GM13976 (cell line): ENCODE measurements at regions of chr16 and their contacts with region 1.

Region 1: DNA sequence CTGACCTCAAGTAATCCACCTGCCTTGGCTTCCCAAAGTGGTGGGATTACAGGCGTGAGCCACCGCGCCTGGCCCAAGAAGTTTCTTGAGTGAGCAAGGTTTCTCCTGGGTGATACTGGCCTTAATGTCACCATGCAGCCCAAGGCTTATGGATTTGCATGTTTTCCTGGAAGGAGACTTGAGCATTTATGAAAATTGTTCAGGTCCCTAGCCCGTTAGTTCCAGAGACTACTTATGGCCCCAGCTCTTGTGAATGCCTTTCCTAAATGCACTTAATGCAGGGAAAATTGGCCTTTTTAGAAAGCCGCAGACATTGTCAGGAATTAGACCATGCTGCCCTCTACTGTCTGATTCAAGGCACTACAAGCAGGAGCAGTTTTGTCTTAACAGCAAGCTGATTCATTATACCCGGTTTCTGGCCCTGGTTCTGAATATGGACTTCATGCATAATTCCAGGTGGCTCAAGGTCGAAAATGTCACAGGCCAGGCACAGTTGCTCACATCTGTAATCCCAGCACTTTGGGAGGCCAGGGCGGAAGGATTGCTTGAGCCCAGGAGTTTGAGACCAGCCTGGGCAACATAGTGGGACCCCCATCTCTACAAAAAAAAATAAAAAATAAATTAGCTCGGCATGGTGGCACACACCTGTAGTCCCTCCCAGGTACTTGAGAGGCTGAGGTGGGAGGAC is 91.3 kb downstream of the SNX29 start:
- DNase-seq: peak; percentile 81
- CTCF ChIP-seq: peak; percentile 84

Region 2: DNA sequence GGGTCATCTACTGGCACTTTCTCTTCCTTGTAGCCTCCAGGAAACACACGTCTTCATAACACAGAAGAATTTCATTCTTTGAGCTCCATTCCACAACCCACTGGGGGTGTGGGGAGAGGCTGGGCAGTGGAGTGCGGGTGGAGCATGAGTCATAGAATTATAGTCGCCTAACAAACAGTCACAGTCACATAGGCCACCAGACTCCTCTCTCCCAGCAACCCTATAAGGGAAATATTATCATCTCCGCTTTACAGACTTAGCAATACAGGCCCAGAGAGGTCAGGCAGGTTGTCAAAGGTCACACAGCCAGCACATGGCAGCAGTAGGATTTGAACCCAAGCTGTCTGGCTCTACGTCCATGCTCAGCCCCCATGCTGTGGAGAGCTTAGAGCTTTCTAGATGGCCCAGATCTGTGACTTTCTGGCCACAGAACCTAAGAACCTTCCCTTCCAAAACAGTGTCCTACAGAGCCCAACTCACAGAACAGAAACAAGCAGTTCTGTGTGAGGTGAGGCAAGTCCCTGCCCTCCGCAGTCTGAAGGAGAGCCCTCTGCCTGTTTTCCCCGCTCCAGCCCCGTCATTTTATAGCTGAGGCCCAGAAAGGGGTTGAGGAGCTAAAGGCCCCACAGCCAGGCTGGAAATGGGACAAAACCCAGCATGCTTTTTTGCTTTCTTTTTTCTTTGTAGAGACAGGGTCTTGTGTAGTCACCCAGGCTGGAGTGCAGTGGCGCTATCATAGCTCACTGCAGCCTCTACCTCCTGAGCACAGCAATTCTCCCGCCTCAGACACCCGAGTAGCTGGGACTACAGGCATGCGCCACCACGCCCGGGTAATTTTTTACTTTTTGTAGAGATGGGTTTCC is 470.4 kb before region 1 on chr16:
- in situ Hi-C with region 1: no loop called
- DNase-seq: no peak
- CTCF ChIP-seq: no peak

Region 3: GRCh38 chr16:11955713-11956123 is 112.1 kb before region 1 on chr16:
- in situ Hi-C with region 1: loop called (anchors 10 kb)
- DNase-seq: no peak
- CTCF ChIP-seq: no peak

Region 4: DNA sequence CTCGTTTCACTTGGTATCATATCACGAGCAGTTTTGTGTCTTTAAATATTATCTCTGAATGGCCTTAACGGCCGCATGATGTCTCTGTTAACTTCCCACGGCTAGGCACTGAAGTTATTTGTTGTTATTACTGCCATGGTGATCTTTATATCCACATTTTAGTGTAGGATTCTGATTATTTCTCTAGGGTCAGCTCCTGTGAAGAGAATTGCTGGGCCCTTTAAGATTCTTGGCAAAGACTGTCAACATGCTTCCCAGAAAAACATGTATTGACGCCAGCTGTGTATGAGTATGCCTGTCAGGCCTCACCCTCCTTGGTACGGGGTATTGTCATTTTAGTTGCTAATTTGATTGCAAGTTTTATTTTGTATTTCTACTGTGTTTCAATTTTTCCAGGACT is 172.2 kb after region 1 on chr16:
- in situ Hi-C with region 1: no loop called
- DNase-seq: no peak
- CTCF ChIP-seq: no peak